ENCODE measurements at regions of chr6 and their contacts with region 1.

Region 1: GRCh38 chr6:88870717-88871330 is 92.6 kb downstream of the RNGTT start:
- DNase-seq: peak; percentile 74
- ATAC-seq: no peak
- H3K4me3 ChIP-seq: no peak overlapping the region
- H3K27ac ChIP-seq: no peak overlapping the region
- H3K4me1 ChIP-seq: peaks cover 7% of the 10 kb centered on the region
- H3K27me3 ChIP-seq: no peaks in the 10 kb centered on the region
- CTCF ChIP-seq: peak; percentile 77
- POLR2A ChIP-seq: no peak
- RAD21 ChIP-seq: peak; percentile 81

Region 2: GRCh38 chr6:87393022-87393622 is 1477.7 kb before region 1 on chr6:
- CTCF ChIA-PET with region 1: no interaction called
- POLR2A ChIA-PET with region 1: no interaction called
- dilution Hi-C with region 1: no loop called
- in situ Hi-C with region 1: no loop called
- intact Hi-C with region 1: loop called (anchors 5 kb)
- DNase-seq: peak; percentile 70
- ATAC-seq: peak; percentile 96
- H3K4me3 ChIP-seq: no peak overlapping the region
- H3K27ac ChIP-seq: no peak overlapping the region
- H3K4me1 ChIP-seq: no peaks in the 10 kb centered on the region
- H3K27me3 ChIP-seq: no peaks in the 10 kb centered on the region
- CTCF ChIP-seq: peak; percentile 71
- POLR2A ChIP-seq: no peak
- RAD21 ChIP-seq: peak; percentile 64

Region 3: DNA sequence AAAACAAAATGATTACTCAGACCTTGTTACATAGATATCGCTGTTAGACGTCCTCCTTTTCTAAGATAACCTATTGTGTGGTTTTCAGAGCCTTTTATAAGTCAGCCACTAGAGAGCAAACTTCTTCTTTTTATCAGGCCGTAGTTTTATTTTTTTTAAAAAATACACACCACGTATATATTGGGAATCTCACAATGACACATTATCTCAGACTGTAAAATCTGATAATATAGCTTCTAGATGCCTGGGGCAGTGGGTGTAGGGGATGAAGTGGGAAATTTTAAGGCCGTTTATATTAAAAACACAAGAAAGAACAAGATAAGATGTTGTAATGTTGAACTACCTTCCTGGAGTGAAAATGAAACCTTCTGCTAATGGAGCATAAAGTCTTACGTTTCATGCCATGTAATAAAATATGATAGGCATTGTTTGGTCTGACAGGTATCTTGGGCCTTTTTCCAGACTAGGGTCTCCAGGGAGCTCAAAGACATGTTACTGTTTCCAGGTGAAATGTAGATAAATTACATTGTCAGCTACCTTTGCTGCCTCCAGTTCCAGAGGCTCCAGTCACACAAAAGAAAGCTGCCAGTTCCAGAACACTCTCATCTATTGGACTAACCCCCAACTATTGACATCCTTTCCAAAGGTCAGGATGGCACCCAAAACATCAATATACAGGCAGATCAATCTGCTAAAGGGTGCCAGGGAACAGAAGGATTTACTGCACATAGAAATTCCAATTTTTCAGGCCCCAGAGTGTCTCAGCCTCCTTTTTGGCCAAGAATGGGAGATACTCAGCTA is 1038.6 kb before region 1 on chr6:
- CTCF ChIA-PET with region 1: interaction called, 3 read pairs
- POLR2A ChIA-PET with region 1: no interaction called
- dilution Hi-C with region 1: no loop called
- in situ Hi-C with region 1: no loop called
- intact Hi-C with region 1: loop called (anchors 2 kb)
- DNase-seq: peak; percentile 30
- ATAC-seq: peak; percentile 84
- H3K4me3 ChIP-seq: peak overlapping the region; percentile 61
- H3K27ac ChIP-seq: no peak overlapping the region
- H3K4me1 ChIP-seq: no peaks in the 10 kb centered on the region
- H3K27me3 ChIP-seq: no peaks in the 10 kb centered on the region
- CTCF ChIP-seq: peak; percentile 49
- POLR2A ChIP-seq: no peak
- RAD21 ChIP-seq: peak; percentile 26; the same call in 1 of the 2 replicates

Region 4: DNA sequence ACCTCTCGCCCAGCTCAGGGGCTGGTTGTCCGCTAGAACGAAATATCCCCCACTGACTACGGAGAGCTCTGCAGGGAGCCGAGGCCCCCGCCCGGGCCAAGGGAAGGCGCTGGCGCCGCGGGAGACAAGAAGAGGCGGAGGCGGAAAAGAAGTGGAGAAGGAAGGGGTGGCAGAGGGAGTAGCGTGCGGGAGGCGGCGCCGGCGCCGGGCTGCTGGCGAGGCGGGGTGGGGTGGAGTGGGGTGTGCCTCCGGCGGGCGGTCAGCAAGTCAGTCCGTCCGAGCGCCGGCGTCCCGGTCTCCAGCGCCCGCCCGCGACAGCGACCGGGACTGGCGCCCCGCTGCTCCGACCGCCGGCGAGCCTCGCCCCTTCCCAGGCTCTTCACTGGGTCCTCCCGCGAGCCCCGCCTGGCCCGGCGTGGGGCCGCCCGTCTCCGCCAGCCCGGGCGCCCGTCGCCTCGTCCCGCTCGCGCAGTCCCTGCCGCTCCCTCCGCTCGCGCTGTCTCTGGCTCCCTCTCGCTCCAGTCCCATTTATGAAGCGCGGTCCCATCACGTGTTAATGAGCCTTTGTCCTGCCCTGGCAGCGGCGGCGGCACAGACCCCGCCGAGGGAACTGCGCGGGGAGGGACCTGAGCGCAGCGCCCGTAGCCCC is 704.9 kb before region 1 on chr6 and contains the start of gene CNR1:
- CTCF ChIA-PET with region 1: interaction called, 3 read pairs
- POLR2A ChIA-PET with region 1: no interaction called
- dilution Hi-C with region 1: no loop called
- in situ Hi-C with region 1: no loop called
- intact Hi-C with region 1: loop called (anchors 5 kb)
- DNase-seq: no peak
- ATAC-seq: peak; percentile 83
- H3K4me3 ChIP-seq: peak within 1 kb of the TSS; percentile 29
- H3K27ac ChIP-seq: no peak within 1 kb of the TSS
- H3K4me1 ChIP-seq: peaks cover 2% of the 10 kb centered on the region; the same call in 1 of the 2 replicates
- H3K27me3 ChIP-seq: peaks cover 46% of the 10 kb centered on the region
- CTCF ChIP-seq: no peak
- POLR2A ChIP-seq: no peak
- RAD21 ChIP-seq: no peak
- total RNA-seq, gene CNR1: not detected in 2 replicates

Region 5: GRCh38 chr6:88780714-88781389 is 90.0 kb before region 1 on chr6:
- CTCF ChIA-PET with region 1: no interaction called
- POLR2A ChIA-PET with region 1: no interaction called
- dilution Hi-C with region 1: no loop called
- in situ Hi-C with region 1: no loop called
- intact Hi-C with region 1: loop called (anchors 2 kb)
- DNase-seq: peak; percentile 70
- ATAC-seq: peak; percentile 84
- H3K4me3 ChIP-seq: no peak overlapping the region
- H3K27ac ChIP-seq: no peak overlapping the region
- H3K4me1 ChIP-seq: no peaks in the 10 kb centered on the region; the same call in 1 of the 2 replicates
- H3K27me3 ChIP-seq: no peaks in the 10 kb centered on the region
- CTCF ChIP-seq: peak; percentile 82
- POLR2A ChIP-seq: no peak
- RAD21 ChIP-seq: peak; percentile 84

Region 6: DNA sequence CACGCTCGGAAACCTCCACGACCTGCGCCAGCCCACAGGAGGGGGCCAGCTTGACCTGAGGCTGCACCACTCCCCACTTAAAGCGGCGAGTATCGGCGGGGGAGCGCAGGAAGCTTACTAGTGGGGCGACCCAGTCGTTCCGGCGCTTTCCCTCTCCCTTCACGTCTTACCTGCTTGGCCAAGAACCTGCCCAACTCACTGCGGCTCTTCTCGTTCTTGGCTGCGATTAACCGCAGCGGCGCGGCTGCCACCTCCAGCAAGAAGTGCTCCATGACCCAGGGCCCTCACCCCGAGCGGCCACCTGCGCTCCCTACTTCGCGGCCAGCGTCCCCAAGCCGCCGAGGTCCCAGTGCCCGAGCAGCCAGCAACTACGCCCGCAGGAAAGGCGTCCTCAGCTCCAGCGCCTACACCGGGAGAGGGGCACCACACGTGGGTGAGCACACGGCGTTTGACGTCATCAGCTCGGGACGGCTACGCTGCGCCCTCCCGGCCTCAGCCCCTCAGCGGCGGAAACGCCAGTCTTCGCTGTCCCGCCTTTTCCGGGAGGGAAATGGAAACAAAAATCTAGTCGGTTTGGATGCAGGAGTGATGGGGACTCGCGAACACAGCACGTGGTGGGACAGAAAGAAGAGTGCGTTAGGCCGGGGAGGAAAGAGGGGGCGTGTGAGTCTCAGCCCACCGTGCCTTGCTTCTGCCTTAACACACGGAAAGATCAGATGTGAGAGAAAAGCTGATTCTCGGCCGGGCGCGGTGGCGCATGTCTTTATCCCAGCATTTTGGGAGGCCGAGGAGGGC is 948.7 kb after region 1 on chr6 and contains the start of gene MDN1:
- CTCF ChIA-PET with region 1: no interaction called
- POLR2A ChIA-PET with region 1: no interaction called
- dilution Hi-C with region 1: no loop called
- in situ Hi-C with region 1: no loop called
- intact Hi-C with region 1: no loop called
- DNase-seq: peak; percentile 95
- ATAC-seq: peak; percentile 98
- H3K4me3 ChIP-seq: peak within 1 kb of the TSS; percentile 64
- H3K27ac ChIP-seq: peak within 1 kb of the TSS; percentile 46
- H3K4me1 ChIP-seq: no peaks in the 10 kb centered on the region
- H3K27me3 ChIP-seq: no peaks in the 10 kb centered on the region
- CTCF ChIP-seq: no peak
- POLR2A ChIP-seq: peak; percentile 62; the same call in 1 of the 2 replicates
- RAD21 ChIP-seq: no peak
- total RNA-seq, gene MDN1: 26.7 and 29.7 TPM in 2 replicates

Measured in IMR-90 (cell line).